GM10248 (cell line): ENCODE measurements at regions of chr3 and their contacts with region 1.

Region 1: DNA sequence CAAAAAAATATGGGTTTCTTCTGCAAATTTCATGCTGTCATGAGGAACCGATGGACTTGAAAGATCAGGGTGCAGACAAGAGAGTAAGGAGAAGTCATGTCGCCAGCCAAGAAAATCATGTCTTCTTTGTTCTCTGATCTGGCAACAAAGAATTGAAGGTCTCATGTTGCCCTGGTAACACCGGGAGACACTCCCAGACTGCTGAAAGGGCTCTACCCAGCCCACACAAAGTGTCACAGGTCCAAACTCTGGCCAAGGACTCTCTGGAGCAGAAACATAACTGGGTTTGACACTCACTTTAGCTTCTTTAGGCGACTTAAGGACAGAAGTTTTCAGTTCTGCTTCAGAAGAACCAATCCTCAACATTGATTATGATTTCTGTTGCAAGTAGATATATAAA is 42.9 kb downstream of the SIDT1 start:
- DNase-seq: no peak
- CTCF ChIP-seq: no peak

Region 2: DNA sequence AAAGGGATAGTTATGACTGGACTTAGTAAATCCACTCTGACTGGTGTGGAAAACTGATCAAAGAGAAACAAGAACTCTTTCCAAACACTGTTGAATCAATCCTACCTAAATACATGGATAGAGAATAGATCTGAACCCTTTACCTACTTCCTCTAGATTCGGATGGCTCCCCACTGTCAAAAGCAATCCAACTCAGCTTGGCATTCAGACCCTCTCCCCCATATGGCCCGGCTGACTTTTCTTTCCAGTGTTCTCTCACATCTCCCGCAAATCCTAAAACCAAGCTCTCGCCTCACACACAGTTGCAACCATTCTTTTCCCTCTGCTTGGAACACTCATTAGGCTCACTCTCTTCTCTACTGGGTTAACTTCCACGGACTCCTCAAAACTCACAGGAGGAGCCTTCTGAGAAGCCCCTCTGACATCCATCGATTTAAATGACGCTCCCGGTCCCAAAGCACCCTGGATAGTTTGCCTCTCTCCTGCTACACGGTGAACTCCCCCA is 60.9 kb before region 1 on chr3:
- CTCF ChIA-PET with region 1: interaction called, 41 read pairs
- POLR2A ChIA-PET with region 1: no interaction called
- DNase-seq: no peak
- CTCF ChIP-seq: no peak

Region 3: GRCh38 chr3:113552851-113553250 is 22.4 kb before region 1 on chr3:
- CTCF ChIA-PET with region 1: interaction called, 39 read pairs
- POLR2A ChIA-PET with region 1: no interaction called
- DNase-seq: peak; percentile 33
- CTCF ChIP-seq: peak; percentile 36

Region 4: GRCh38 chr3:113560831-113561623 is 14.2 kb before region 1 on chr3:
- CTCF ChIA-PET with region 1: interaction called, 39 read pairs
- POLR2A ChIA-PET with region 1: no interaction called
- DNase-seq: no peak
- CTCF ChIP-seq: no peak

Region 5: DNA sequence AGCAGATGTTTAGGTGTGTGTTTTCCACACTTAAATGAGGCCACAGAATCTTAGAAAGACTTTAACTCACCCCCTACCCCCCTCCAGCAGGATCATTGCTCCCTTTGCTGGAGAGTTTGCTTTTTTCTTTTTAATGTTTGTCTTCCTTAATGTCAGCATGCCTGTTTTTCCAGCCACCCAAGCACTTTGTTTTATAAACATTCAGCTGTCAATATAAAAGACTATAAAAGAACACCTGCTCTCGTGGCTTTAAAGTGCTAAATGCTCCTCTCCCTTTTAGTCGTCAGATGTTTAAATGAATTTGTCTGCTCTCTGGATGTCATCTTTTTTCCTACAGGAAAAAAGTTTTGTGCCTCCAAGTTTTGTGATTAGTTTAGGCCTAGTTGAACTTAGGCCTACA is 18.9 kb after region 1 on chr3:
- CTCF ChIA-PET with region 1: interaction called, 10 read pairs
- POLR2A ChIA-PET with region 1: no interaction called
- DNase-seq: no peak
- CTCF ChIP-seq: no peak

Region 6: DNA sequence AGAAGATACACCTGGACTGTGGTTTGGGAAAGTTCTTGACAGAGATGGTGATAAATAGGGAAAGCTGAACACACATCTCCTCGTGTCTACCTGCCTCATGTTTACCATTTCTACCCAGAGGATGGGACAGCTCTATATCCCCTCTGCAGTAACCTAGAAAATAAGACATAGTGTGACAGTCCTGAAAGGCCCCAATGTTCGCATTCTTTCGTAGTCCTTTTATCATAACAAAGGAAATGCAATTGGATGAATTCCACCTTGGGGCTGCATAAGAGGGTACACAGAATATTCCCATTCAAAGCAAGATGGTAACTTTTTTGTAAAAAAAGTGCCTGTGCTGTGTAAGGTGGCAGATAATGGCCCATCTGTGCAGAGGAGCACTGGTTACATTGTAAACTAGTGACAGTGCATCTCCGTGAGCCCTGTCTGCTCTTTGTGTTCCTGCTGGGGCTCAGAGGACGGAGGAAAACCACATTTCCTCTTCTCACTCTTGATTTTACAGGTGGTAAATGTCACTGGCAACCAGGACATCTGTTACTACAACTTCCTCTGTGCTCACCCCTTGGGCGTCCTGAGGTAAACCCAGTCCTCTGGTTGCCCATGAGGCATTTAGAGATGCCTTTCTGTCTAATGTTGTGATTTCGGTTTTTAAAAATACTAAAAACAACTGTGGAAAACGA is 31.5 kb after region 1 on chr3:
- CTCF ChIA-PET with region 1: interaction called, 24 read pairs
- POLR2A ChIA-PET with region 1: no interaction called
- DNase-seq: peak; percentile 78
- CTCF ChIP-seq: no peak